ENCODE measurements at regions of chrX and their contacts with region 1.

Region 1: GRCh38 chrX:149611623-149612175 is 16.6 kb upstream of the HSFX2 start:
- DNase-seq: no peak
- H3K4me3 ChIP-seq: no peak overlapping the region
- H3K27ac ChIP-seq: no peak overlapping the region
- H3K4me1 ChIP-seq: no peaks in the 10 kb centered on the region
- H3K27me3 ChIP-seq: no peaks in the 10 kb centered on the region
- CTCF ChIP-seq: no peak
- POLR2A ChIP-seq: no peak

Region 2: GRCh38 chrX:148541544-148541983 is 1070.1 kb before region 1 on chrX:
- intact Hi-C with region 1: loop called (anchors 5 kb)
- DNase-seq: no peak
- H3K4me3 ChIP-seq: no peak overlapping the region
- H3K27ac ChIP-seq: no peak overlapping the region
- H3K4me1 ChIP-seq: no peaks in the 10 kb centered on the region
- H3K27me3 ChIP-seq: no peaks in the 10 kb centered on the region
- CTCF ChIP-seq: no peak
- POLR2A ChIP-seq: no peak

Measured in vagina (tissue), 2 donors.